Activated CD4-positive, alpha-beta T cell treated with anti-CD3 and anti-CD28 coated beads, Interleukin-2, amount 10 ng/mL, durations not matched to agents 24 days and 14 days (primary cell): ENCODE measurements at regions of chr12 and their contacts with region 1.

Region 1: DNA sequence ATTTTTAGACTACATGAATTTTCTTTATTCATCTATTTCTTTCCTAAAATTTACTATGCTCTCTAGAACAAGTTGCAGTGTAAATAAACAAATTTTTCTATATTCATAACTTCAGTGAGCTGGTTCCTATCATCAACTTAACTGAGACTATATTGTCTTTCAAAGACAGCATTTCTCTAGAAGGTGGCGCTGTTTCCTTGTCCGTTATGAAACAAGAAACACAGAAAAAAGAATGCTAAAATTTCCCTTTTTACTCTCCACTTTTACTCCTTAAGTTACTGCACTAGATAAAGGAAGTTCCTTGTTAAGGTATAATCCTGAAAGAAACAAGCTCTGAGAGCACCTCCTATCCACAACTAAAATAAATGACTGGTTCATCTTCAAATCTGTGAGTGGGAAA is 8.2 kb upstream of the CLEC2A start:
- DNase-seq: peak; percentile 74
- H3K4me3 Mint-ChIP-seq: no peak overlapping the region
- H3K27ac Mint-ChIP-seq: no peak overlapping the region
- H3K4me1 Mint-ChIP-seq: peaks cover 22% of the 10 kb centered on the region
- H3K27me3 Mint-ChIP-seq: peaks cover 28% of the 10 kb centered on the region

Region 2: DNA sequence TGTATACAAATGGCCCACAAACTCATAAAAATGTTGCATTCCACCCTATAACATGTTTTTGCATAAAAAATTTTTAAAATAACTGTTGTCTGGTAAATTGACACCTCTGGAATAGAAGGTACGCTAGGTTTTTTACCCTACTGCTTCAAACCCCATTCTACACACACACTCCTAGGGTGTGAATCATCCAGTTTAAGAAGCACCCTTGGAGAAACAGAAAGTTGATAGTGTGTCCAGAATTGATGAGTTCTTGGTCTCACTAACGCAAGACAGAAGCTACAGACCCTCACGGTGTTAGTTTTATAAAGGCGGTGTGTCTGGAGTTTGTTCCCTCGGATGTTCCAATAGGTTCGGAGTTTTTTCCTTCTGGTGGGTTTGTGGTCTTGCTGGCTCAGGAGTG is 491.2 kb before region 1 on chr12:
- intact Hi-C with region 1: no loop called
- DNase-seq: no peak
- H3K4me3 Mint-ChIP-seq: peak overlapping the region; percentile 99
- H3K27ac Mint-ChIP-seq: no peak overlapping the region
- H3K4me1 Mint-ChIP-seq: peaks cover 21% of the 10 kb centered on the region
- H3K27me3 Mint-ChIP-seq: peaks cover 2% of the 10 kb centered on the region

Region 3: GRCh38 chr12:10016881-10017280 is 76.5 kb after region 1 on chr12:
- intact Hi-C with region 1: loop called (anchors 5 kb)
- DNase-seq: no peak
- H3K4me3 Mint-ChIP-seq: no peak overlapping the region
- H3K27ac Mint-ChIP-seq: no peak overlapping the region
- H3K4me1 Mint-ChIP-seq: no peaks in the 10 kb centered on the region
- H3K27me3 Mint-ChIP-seq: peaks cover 28% of the 10 kb centered on the region